ENCODE measurements at regions of chr6 and their contacts with region 1.

Region 1: GRCh38 chr6:108113557-108114519 is 39.3 kb upstream of the OSTM1 start:
- DNase-seq: no peak
- H3K4me3 Mint-ChIP-seq: peak overlapping the region; percentile 72
- H3K27ac Mint-ChIP-seq: no peak overlapping the region
- H3K4me1 Mint-ChIP-seq: peaks cover 40% of the 10 kb centered on the region
- H3K27me3 Mint-ChIP-seq: peaks cover 79% of the 10 kb centered on the region

Region 2: DNA sequence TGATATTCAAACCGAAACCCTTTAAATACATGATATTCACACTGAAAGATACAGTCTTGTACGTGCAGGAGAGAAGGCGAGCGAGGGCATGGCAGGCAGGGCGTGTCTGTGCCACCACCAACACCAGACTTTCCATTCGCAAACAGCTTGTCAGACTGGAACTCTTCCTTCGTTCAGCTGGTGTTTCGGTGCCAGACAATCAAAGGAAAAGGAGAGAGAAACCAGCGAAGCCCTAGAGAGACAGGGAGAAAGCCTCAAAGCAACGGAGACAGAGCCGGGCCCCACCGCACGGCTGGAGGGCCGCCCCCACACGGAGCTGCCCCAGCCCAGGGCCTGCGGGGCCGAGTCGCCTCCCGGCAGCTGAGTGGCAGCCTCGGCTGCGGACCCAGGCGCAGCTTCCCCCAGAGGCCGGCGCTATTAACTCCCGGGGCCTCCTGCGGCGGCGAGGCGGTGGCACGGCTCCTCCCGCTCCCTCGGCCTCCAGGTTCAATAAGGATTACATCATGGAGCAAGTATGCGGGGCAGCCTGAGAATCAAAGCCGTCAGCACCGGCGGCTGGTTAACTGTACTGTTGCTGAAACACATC is 19.8 kb after region 1 on chr6:
- CTCF ChIA-PET with region 1: no interaction called
- intact Hi-C with region 1: loop called (anchors 1 kb)
- DNase-seq: peak; percentile 57
- H3K4me3 Mint-ChIP-seq: peak overlapping the region; percentile 79
- H3K27ac Mint-ChIP-seq: no peak overlapping the region
- H3K4me1 Mint-ChIP-seq: peaks cover 15% of the 10 kb centered on the region
- H3K27me3 Mint-ChIP-seq: peaks cover 72% of the 10 kb centered on the region

Region 3: DNA sequence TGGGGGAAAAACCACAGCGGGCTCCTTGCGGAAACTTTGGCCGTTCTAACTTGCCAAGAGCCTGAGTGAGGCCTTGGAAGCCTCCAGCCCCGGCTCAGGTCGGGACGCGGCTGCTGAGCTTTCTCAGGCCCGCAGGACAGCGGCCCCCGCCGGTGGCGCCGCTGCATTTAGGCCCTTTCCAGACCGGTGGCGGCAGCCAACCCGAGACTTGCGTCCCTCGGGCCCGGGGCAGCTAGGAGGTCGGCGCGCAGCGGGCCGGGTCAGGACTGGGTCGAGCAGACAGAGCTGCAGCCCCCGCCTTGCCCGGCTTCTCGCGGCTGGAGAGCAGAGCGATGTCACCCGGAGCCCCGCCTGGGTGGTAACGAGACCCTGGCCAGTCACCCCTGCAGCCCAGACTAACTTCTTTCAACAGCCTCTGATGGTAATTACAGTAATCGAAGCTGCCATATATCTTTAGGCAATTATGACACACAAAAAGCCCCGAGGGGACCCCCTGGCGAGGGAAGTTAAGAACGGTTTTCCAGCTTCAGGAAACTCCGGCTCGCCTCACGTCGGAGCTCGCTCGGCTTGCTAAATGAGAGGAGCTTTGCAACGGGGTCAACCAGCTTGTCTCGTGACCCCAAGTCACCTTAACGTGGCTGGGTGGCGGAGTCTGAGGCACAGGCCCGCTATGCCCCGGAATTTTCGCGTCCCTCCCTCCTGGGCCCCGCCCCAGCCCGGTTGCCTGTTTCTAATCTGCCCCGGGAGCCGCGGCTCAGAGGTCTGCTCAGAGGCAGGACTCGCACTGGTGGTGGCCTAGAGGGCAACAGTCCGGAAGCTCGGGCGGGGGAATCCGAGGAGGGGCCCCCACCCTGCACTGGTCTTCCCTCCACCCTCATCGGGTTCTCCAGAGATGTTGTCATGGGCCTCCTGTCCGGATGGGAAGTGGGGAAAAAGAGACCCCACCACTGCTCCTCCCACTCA is 54.9 kb after region 1 on chr6:
- CTCF ChIA-PET with region 1: interaction called, 3 read pairs
- intact Hi-C with region 1: loop called (anchors 1 kb)
- DNase-seq: peak; percentile 33
- H3K4me3 Mint-ChIP-seq: peak overlapping the region; percentile 43
- H3K27ac Mint-ChIP-seq: no peak overlapping the region
- H3K4me1 Mint-ChIP-seq: peaks cover 44% of the 10 kb centered on the region
- H3K27me3 Mint-ChIP-seq: peaks cover 84% of the 10 kb centered on the region

Region 4: GRCh38 chr6:108492131-108492766 is 378.4 kb after region 1 on chr6:
- CTCF ChIA-PET with region 1: interaction called, 30 read pairs
- intact Hi-C with region 1: loop called (anchors 1 kb)
- DNase-seq: no peak
- H3K4me3 Mint-ChIP-seq: no peak overlapping the region
- H3K27ac Mint-ChIP-seq: no peak overlapping the region
- H3K4me1 Mint-ChIP-seq: no peaks in the 10 kb centered on the region
- H3K27me3 Mint-ChIP-seq: peaks cover 2% of the 10 kb centered on the region

Region 5: DNA sequence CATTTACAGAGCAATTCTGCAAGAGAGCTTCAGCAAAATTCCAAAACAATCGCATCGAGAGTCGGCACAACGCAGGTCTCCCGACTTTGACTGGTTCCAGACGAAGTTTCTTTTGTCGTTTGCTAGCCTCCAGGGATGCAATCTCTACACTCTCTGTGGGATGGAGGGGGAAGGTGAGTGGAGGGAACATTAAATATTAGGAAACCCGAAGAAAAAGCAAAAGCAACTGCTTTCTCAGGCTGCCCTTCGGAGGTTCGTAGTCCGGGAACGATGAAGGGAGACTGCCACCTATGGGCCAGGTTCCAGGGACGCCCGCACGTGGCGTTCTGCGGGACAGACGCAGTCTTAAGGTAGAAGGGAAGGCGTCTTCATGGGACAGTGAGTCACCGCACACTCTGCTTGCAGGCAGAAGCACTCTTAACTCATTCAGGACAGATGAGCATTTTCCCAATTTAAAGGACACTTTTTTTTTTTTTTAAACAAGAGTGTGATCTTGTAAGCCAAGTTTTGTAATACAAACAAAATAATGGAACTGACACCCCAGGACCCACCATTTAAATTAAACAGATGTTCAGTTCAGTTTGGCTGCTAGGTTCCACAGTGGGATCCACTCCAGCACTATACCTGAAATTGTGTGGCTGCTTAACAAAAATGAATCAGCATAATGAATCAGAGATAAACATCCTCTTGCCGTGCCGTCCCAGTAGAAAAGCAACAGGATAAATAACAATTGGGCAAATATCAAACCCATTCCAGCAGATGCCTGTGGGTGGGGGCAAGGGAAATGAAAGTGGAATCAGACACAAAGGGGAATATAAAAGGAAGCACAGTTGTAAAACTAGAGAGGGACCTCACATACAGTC is 668.6 kb after region 1 on chr6:
- CTCF ChIA-PET with region 1: no interaction called
- intact Hi-C with region 1: loop called (anchors 5 kb)
- DNase-seq: peak; percentile 92
- H3K4me3 Mint-ChIP-seq: peak overlapping the region; percentile 68
- H3K27ac Mint-ChIP-seq: no peak overlapping the region
- H3K4me1 Mint-ChIP-seq: peaks cover 10% of the 10 kb centered on the region
- H3K27me3 Mint-ChIP-seq: peaks cover 3% of the 10 kb centered on the region

Measured in activated naive CD4-positive, alpha-beta T cell treated with anti-CD3 and anti-CD28 coated beads for 36 hours (primary cell).